PC-9 (cell line): ENCODE measurements at regions of chr1 and their contacts with region 1.

Region 1: GRCh38 chr1:209490013-209490412 is 93.5 kb upstream of the CAMK1G start:
- DNase-seq: peak in 1 of 2 experiments; percentile 59
- H3K4me3 ChIP-seq: no peak overlapping the region
- H3K27ac ChIP-seq: no peak overlapping the region
- H3K4me1 ChIP-seq: no peaks in the 10 kb centered on the region
- H3K27me3 ChIP-seq: no peaks in the 10 kb centered on the region
- CTCF ChIP-seq: peak; percentile 80

Region 2: GRCh38 chr1:208652296-208653160 is 837.5 kb before region 1 on chr1:
- CTCF ChIA-PET with region 1: interaction called, 4 read pairs
- POLR2A ChIA-PET with region 1: no interaction called
- intact Hi-C with region 1: loop called (anchors 1 kb)
- DNase-seq: peak in 1 of 2 experiments; percentile 37
- H3K4me3 ChIP-seq: no peak overlapping the region
- H3K27ac ChIP-seq: no peak overlapping the region
- H3K4me1 ChIP-seq: no peaks in the 10 kb centered on the region
- H3K27me3 ChIP-seq: peaks cover 8% of the 10 kb centered on the region; the same call in 1 of the 2 replicates
- CTCF ChIP-seq: peak; percentile 88

Region 3: GRCh38 chr1:209207701-209208286 is 282.2 kb before region 1 on chr1:
- CTCF ChIA-PET with region 1: interaction called, 3 read pairs
- POLR2A ChIA-PET with region 1: no interaction called
- intact Hi-C with region 1: loop called (anchors 1 kb)
- DNase-seq: peak in 1 of 2 experiments; percentile 47
- H3K4me3 ChIP-seq: no peak overlapping the region
- H3K27ac ChIP-seq: no peak overlapping the region
- H3K4me1 ChIP-seq: no peaks in the 10 kb centered on the region
- H3K27me3 ChIP-seq: no peaks in the 10 kb centered on the region; the same call in 1 of the 2 replicates
- CTCF ChIP-seq: 0 out of 2 replicates have a peak, but pooled peaks have one; percentile 20

Region 4: DNA sequence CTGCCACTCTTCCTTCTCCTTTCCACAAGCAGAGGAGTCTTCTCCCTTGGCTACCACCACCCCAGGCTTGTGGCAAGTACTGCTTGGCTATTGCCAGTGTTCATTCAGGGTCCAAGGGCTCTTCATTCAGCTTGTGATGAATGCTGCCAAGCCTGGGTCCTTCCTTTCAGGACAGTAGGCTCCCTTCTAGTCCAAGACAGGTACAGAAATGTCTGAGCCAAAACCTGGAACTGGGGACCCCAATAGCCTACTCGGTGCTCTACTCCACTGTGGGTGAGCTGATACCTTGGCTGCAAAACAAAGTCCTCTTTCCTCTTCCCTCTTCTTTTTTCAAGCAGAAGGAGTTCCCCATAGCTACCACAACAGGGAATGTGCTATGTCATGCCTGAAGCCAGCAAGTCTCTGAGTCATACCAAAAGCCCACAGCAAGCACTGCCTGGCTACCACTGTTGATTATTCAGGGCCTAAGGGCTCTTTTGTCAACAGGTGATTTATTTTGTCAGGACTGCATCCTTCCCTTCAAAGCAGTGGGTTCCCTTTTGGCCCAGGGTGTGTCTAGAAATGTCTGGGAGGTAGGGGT is 1107.6 kb after region 1 on chr1:
- CTCF ChIA-PET with region 1: no interaction called
- POLR2A ChIA-PET with region 1: no interaction called
- intact Hi-C with region 1: no loop called
- DNase-seq: peak; percentile 73 to 95
- H3K4me3 ChIP-seq: no peak overlapping the region; the same call in 1 of the 2 replicates
- H3K27ac ChIP-seq: peak overlapping the region; percentile 98
- H3K4me1 ChIP-seq: peaks cover 37% of the 10 kb centered on the region
- H3K27me3 ChIP-seq: no peaks in the 10 kb centered on the region
- CTCF ChIP-seq: no peak